ENCODE measurements at regions of chr3 and their contacts with region 1.

Region 1: GRCh38 chr3:87771341-87772192 is 287.2 kb downstream of the CGGBP1 start:
- DNase-seq: peak; percentile 59
- ATAC-seq: peak; percentile 70
- H3K4me3 ChIP-seq: no peak overlapping the region
- H3K4me3 Mint-ChIP-seq: no peak overlapping the region
- H3K27ac ChIP-seq: no peak overlapping the region
- H3K27ac Mint-ChIP-seq: no peak overlapping the region
- H3K4me1 ChIP-seq: no peaks in the 10 kb centered on the region
- H3K4me1 Mint-ChIP-seq: no peaks in the 10 kb centered on the region
- H3K27me3 ChIP-seq: no peaks in the 10 kb centered on the region
- H3K27me3 Mint-ChIP-seq: peaks cover 30% of the 10 kb centered on the region
- CTCF ChIP-seq: peak; percentile 76

Region 2: GRCh38 chr3:87761341-87761740 is 10.2 kb before region 1 on chr3:
- CTCF ChIA-PET with region 1: interaction called, 11 read pairs
- POLR2A ChIA-PET with region 1: no interaction called
- intact Hi-C with region 1: no loop called
- DNase-seq: no peak
- ATAC-seq: no peak
- H3K4me3 ChIP-seq: no peak overlapping the region
- H3K4me3 Mint-ChIP-seq: no peak overlapping the region
- H3K27ac ChIP-seq: no peak overlapping the region
- H3K27ac Mint-ChIP-seq: no peak overlapping the region
- H3K4me1 ChIP-seq: no peaks in the 10 kb centered on the region
- H3K4me1 Mint-ChIP-seq: no peaks in the 10 kb centered on the region
- H3K27me3 ChIP-seq: no peaks in the 10 kb centered on the region
- H3K27me3 Mint-ChIP-seq: no peaks in the 10 kb centered on the region
- CTCF ChIP-seq: no peak

Region 3: GRCh38 chr3:88075072-88075471 is 303.5 kb after region 1 on chr3:
- CTCF ChIA-PET with region 1: no interaction called
- POLR2A ChIA-PET with region 1: no interaction called
- intact Hi-C with region 1: no loop called
- DNase-seq: no peak
- ATAC-seq: no peak
- H3K4me3 ChIP-seq: no peak overlapping the region
- H3K4me3 Mint-ChIP-seq: no peak overlapping the region
- H3K27ac ChIP-seq: no peak overlapping the region
- H3K27ac Mint-ChIP-seq: no peak overlapping the region
- H3K4me1 ChIP-seq: peaks cover 0 to 6% of the 10 kb centered on the region in 2 donors
- H3K4me1 Mint-ChIP-seq: peaks cover 38% of the 10 kb centered on the region
- H3K27me3 ChIP-seq: no peaks in the 10 kb centered on the region
- H3K27me3 Mint-ChIP-seq: no peaks in the 10 kb centered on the region
- CTCF ChIP-seq: no peak